ENCODE measurements at regions of chr3 and their contacts with region 1.

Region 1: GRCh38 chr3:142857056-142857455 is 31.8 kb downstream of the PCOLCE2 start:
- DNase-seq: peak; percentile 51 to 69
- ATAC-seq: peak; percentile 82 to 98 (median 95)
- H3K4me3 ChIP-seq: no peak overlapping the region
- H3K27ac ChIP-seq: peak overlapping the region in 9 of 10 donors; percentile 17 to 84 (median 55)
- H3K4me1 ChIP-seq: peaks cover 0 to 39% (median 21%) of the 10 kb centered on the region in 9 donors
- H3K27me3 ChIP-seq: no peaks in the 10 kb centered on the region
- CTCF ChIP-seq: peak in 8 of 9 donors; percentile 12 to 54 (median 38)

Region 2: GRCh38 chr3:142498397-142499180 is 358.5 kb before region 1 on chr3:
- intact Hi-C with region 1: no loop called
- DNase-seq: no peak
- ATAC-seq: no peak
- H3K4me3 ChIP-seq: no peak overlapping the region
- H3K27ac ChIP-seq: no peak overlapping the region
- H3K4me1 ChIP-seq: no peaks in the 10 kb centered on the region
- H3K27me3 ChIP-seq: no peaks in the 10 kb centered on the region
- CTCF ChIP-seq: no peak

Region 3: DNA sequence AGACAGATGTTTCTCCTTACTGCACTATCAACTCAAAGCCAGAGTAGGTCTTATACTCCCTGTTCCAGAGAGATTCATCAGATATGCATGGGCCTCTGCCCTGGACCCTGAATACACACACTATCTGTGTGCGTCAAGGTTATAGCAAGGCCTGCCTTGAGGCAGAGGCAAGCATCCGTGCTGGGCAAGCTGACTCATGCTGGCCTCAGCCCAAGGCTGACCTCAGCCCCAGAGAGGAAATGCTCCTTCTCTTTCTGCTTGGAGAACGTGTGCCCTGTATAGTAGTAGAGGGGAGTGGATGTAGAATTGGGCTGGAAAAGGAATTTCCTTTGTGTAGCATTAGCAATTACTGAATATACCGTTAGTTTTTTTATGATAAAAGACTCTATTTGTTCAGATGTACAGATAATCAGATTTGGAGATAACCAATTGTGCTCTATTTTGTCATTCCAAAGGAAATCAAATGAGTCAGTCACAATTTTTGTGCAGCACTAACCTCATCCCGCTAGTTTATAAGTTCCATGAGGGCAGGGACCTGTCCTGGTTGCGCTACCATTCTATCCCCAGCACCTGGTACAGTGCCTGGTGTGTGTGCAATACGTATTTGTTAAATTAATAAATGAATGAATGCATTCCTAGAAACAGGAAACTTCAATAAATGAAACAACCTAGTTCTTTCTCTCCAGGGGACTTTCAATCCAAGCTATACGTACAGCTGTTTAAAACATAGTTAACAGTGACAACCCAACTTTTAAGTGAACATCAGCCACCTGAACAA is 119.8 kb after region 1 on chr3:
- intact Hi-C with region 1: loop called in 2 of 10 experiments (anchors 10 kb)
- DNase-seq: peak; percentile 84 to 85
- ATAC-seq: peak; percentile 73 to 92 (median 85)
- H3K4me3 ChIP-seq: no peak overlapping the region
- H3K27ac ChIP-seq: peak overlapping the region in 8 of 10 donors; percentile 53 to 89 (median 76)
- H3K4me1 ChIP-seq: peaks cover 4 to 48% (median 29%) of the 10 kb centered on the region in 9 donors
- H3K27me3 ChIP-seq: no peaks in the 10 kb centered on the region
- CTCF ChIP-seq: no peak

Region 4: DNA sequence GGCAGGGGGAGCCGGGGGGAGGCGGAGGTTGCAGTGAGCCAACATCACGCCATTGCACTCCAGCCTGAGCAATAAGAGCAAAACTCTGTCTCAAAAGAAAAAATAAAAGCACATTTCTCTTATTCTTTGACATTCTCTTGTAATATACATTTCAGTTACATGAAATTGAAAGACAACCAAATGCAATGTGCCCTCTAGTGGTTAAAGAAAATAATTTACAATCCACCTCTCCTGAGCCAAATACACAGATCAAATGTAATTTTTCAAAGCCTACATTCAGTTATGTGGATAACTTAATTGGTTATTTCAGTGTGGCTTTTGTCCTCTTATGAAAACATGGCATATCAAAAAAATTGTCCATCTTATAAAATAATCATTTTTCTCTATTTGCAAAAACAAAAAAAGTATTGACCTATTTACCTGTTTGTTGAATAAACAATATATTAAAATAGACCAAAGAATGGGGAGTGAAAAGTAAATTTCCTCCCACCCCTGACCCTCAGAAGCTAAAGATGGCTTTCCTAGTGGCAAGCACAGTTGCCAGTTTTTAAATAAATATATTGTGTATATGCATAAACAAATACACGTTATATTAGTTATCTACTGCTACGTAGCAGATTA is 130.1 kb after region 1 on chr3:
- intact Hi-C with region 1: loop called in 1 of 10 experiments (anchors 10 kb)
- DNase-seq: no peak
- ATAC-seq: peak in 5 of 8 donors; percentile 40 to 70 (median 67)
- H3K4me3 ChIP-seq: peak overlapping the region in 3 of 10 donors; percentile 0 to 5 (median 2)
- H3K27ac ChIP-seq: peak overlapping the region in 8 of 10 donors; percentile 9 to 68 (median 60)
- H3K4me1 ChIP-seq: peaks cover 0 to 15% (median 0%) of the 10 kb centered on the region in 9 donors
- H3K27me3 ChIP-seq: no peaks in the 10 kb centered on the region
- CTCF ChIP-seq: peak; percentile 39 to 81 (median 71)

Region 5: DNA sequence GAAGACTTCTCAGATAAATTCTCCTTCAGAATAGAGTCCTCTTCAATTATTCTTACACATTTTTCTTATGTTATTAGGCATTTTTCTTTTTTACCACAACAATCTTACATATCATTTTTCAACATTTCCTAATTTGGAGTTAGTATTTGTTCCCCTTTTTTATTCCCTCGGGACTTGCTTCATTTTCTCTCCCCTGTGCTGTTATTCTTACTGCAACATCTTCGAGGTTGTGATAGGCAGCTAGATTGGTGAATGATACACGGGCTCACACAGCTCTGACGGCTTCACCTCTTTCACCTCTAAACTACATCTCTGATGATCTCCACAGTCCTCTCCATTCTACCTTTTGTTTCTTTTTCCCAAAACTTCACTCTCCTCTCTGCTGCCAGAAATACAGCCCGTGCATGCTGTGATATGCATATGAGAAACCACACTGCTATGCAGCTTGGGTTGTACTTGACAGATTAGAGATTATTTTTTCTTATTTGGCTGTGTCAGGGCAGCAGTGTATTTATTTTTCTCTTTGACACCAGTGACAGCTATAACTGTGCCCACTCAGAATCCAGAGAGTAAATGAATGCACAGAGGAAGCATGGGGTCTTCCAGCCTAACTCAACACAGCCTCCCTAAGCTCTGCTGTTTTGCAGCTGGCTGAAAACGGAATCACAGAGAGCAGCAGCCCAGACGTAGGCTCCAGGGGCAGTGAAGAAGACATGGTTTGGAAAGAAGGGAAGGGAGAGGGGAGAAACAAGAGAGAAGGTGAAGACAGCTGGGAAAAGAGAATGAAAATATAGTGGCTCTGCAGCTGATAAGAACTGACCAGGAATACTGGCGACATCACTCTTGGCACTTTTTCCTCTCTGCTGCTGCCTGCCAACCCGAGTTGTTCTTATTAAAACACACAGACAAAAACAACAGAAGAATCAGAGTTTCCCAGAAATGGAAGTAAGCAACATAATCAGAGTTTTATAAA is 929.4 kb after region 1 on chr3:
- intact Hi-C with region 1: no loop called
- DNase-seq: peak; percentile 24 to 36
- ATAC-seq: peak in 7 of 8 donors; percentile 30 to 65 (median 53)
- H3K4me3 ChIP-seq: peak overlapping the region in 5 of 10 donors; percentile 5 to 27 (median 9)
- H3K27ac ChIP-seq: peak overlapping the region in 3 of 10 donors; percentile 15 to 41 (median 34)
- H3K4me1 ChIP-seq: peaks cover 0 to 16% (median 4%) of the 10 kb centered on the region in 9 donors
- H3K27me3 ChIP-seq: no peaks in the 10 kb centered on the region
- CTCF ChIP-seq: no peak

Measured in heart right ventricle (tissue), 16 donors.